Activated CD8-positive, alpha-beta T cell treated with anti-CD3 and anti-CD28 coated beads, Interleukin-2, amount 10 ng/mL, durations not matched to agents 7 days and 5 days (primary cell): ENCODE measurements at regions of chr18 and their contacts with region 1.

Region 1: DNA sequence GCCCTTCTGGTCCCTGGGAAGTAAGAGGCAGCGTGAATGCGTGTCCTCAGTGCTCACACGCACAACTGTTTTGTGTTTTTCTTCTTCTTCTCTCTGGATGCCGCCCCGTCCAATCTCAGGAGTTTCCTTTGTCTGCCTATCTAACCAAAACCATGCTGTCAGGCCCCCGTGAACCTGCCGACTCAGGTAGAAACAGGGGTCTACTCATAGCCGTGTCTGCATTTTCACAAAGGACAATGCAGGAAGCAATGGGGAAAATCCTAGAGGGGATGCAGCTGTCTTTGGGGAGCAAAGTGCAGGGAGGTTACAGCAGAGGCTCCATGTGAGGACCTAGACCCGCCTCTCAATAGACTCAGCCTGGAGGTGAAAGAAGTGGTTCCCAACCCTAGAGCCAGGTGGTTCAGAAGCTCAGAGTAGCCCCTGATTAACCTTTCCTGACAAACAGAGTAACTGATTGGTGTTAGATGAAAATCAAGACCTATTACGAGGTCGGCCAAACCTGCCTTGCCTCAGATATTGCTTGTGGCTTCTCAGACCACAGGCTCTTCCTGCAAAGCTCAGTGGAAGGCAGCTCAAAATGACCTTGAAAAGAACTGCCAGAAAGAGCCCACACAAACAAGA is 49.3 kb downstream of the CD226 start:
- DNase-seq: peak; percentile 59
- ATAC-seq: peak; percentile 66
- H3K4me3 Mint-ChIP-seq: peak overlapping the region; percentile 78
- H3K27ac Mint-ChIP-seq: peak overlapping the region; percentile 96
- H3K4me1 Mint-ChIP-seq: peaks cover 66% of the 10 kb centered on the region
- H3K27me3 Mint-ChIP-seq: no peaks in the 10 kb centered on the region

Region 2: DNA sequence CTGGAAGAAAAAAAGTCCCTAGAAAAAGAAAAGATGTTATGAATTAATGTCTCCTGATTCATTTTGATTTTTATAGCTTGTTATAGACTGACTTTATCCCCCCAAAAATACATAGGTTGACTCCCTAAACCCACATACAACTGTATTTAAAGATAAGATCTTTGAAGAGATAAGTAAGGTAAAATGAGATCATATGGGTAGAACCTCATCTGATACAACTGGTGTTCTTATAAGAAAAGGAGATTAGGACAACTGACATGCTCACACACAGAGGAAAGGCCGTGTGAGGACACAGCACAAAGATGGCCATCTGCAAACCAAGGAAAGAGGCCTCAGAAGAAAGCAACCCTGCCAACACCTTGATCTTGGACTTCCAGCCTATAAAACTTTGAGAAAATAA is 68.2 kb before region 1 on chr18:
- CTCF ChIA-PET with region 1: no interaction called
- POLR2A ChIA-PET with region 1: no interaction called
- DNase-seq: no peak
- ATAC-seq: no peak
- H3K4me3 Mint-ChIP-seq: no peak overlapping the region
- H3K27ac Mint-ChIP-seq: no peak overlapping the region
- H3K4me1 Mint-ChIP-seq: peaks cover 2% of the 10 kb centered on the region
- H3K27me3 Mint-ChIP-seq: no peaks in the 10 kb centered on the region

Region 3: GRCh38 chr18:69885841-69886531 is 12.4 kb before region 1 on chr18:
- CTCF ChIA-PET with region 1: interaction called, 7 read pairs
- POLR2A ChIA-PET with region 1: interaction called, 20 read pairs
- DNase-seq: peak; percentile 47
- ATAC-seq: peak; percentile 68
- H3K4me3 Mint-ChIP-seq: peak overlapping the region; percentile 53
- H3K27ac Mint-ChIP-seq: peak overlapping the region; percentile 88
- H3K4me1 Mint-ChIP-seq: peaks cover 62% of the 10 kb centered on the region
- H3K27me3 Mint-ChIP-seq: no peaks in the 10 kb centered on the region

Region 4: GRCh38 chr18:69935319-69936190 is 37.2 kb after region 1 on chr18:
- CTCF ChIA-PET with region 1: interaction called, 26 read pairs
- POLR2A ChIA-PET with region 1: interaction called, 29 read pairs
- DNase-seq: peak; percentile 90
- ATAC-seq: peak; percentile 96
- H3K4me3 Mint-ChIP-seq: no peak overlapping the region
- H3K27ac Mint-ChIP-seq: no peak overlapping the region
- H3K4me1 Mint-ChIP-seq: peaks cover 16% of the 10 kb centered on the region
- H3K27me3 Mint-ChIP-seq: no peaks in the 10 kb centered on the region

Region 5: GRCh38 chr18:69947361-69948133 is 49.2 kb after region 1 on chr18 and contains the start of gene CD226:
- CTCF ChIA-PET with region 1: interaction called, 7 read pairs
- POLR2A ChIA-PET with region 1: interaction called, 14 read pairs
- DNase-seq: peak; percentile 67
- ATAC-seq: peak; percentile 74
- H3K4me3 Mint-ChIP-seq: no peak within 1 kb of the TSS
- H3K27ac Mint-ChIP-seq: no peak within 1 kb of the TSS
- H3K4me1 Mint-ChIP-seq: peaks cover 45% of the 10 kb centered on the region
- H3K27me3 Mint-ChIP-seq: no peaks in the 10 kb centered on the region
- total RNA-seq, gene CD226: 47.6 to 52.2 TPM